Natural killer cell (primary cell): ENCODE measurements at regions of chr20 and their contacts with region 1.

Region 1: DNA sequence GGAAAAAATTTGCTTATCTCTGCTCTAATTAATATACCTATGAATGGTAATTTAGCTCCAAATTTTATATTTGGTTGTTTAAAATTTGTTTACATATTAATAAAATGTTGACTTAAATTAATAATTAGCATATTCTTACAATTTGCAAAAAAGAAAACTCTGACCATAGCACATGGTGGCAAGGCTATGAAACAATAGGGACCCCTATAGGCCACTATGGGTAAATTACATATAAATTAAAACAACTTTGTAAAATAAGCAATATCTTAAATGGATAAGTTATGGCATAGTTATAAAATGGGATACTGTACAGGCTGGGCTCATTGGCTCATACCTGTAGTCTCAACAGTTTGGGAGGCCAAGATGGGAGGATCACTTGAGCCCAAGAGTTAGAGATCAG is 76.0 kb downstream of the MKKS start:
- DNase-seq: peak in 1 of 2 donors; percentile 19
- ATAC-seq: peak; percentile 53 to 86 (median 77)
- H3K4me3 ChIP-seq: no peak overlapping the region
- H3K4me3 Mint-ChIP-seq: no peak overlapping the region
- H3K27ac ChIP-seq: no peak overlapping the region
- H3K27ac Mint-ChIP-seq: no peak overlapping the region
- H3K4me1 ChIP-seq: no peaks in the 10 kb centered on the region
- H3K4me1 Mint-ChIP-seq: peaks cover 0 to 9% of the 10 kb centered on the region in 2 donors
- H3K27me3 ChIP-seq: no peaks in the 10 kb centered on the region
- H3K27me3 Mint-ChIP-seq: peaks cover 2 to 16% of the 10 kb centered on the region in 2 donors
- CTCF ChIP-seq: peak; percentile 75

Region 2: DNA sequence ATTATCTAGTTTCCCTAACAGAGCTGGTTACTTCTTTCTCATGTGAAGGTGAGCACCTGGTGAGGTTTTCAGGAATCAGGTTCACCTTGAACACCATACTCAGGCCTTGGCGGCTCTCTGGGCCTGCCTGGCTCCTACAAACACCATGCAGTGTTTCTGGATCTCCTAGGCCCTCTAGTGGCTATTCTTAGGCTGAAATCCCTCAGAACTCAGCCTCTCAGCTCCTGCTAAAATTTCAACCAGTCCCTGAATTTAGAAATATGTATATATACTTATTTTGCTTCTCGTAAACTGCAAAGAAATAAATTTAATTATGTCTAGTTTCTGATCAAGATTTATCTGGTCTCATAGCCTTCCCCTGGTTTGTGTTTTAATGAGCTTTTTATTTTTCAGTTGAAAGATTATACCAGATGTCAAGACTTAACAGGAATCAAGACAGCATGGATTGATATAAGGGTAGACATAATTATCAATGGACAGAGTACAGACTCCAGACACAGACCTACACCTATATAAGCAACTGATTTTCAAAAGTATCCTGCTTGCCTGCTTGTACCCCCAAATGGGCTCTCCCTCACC is 267.3 kb before region 1 on chr20:
- intact Hi-C with region 1: loop called (anchors 5 kb)
- DNase-seq: peak in 1 of 2 donors; percentile 62
- ATAC-seq: peak in 2 of 3 donors; percentile 51 to 63
- H3K4me3 ChIP-seq: no peak overlapping the region
- H3K4me3 Mint-ChIP-seq: no peak overlapping the region
- H3K27ac ChIP-seq: no peak overlapping the region
- H3K27ac Mint-ChIP-seq: no peak overlapping the region
- H3K4me1 ChIP-seq: no peaks in the 10 kb centered on the region
- H3K4me1 Mint-ChIP-seq: no peaks in the 10 kb centered on the region
- H3K27me3 ChIP-seq: no peaks in the 10 kb centered on the region
- H3K27me3 Mint-ChIP-seq: peaks cover 5 to 8% of the 10 kb centered on the region in 2 donors
- CTCF ChIP-seq: peak; percentile 48

Region 3: GRCh38 chr20:10179574-10180298 is 178.2 kb before region 1 on chr20:
- intact Hi-C with region 1: no loop called
- DNase-seq: no peak
- ATAC-seq: peak in 1 of 3 donors; percentile 14
- H3K4me3 ChIP-seq: no peak overlapping the region
- H3K4me3 Mint-ChIP-seq: no peak overlapping the region
- H3K27ac ChIP-seq: no peak overlapping the region
- H3K27ac Mint-ChIP-seq: no peak overlapping the region
- H3K4me1 ChIP-seq: no peaks in the 10 kb centered on the region
- H3K4me1 Mint-ChIP-seq: no peaks in the 10 kb centered on the region
- H3K27me3 ChIP-seq: no peaks in the 10 kb centered on the region
- H3K27me3 Mint-ChIP-seq: peaks cover 16 to 20% of the 10 kb centered on the region in 2 donors
- CTCF ChIP-seq: no peak

Region 4: DNA sequence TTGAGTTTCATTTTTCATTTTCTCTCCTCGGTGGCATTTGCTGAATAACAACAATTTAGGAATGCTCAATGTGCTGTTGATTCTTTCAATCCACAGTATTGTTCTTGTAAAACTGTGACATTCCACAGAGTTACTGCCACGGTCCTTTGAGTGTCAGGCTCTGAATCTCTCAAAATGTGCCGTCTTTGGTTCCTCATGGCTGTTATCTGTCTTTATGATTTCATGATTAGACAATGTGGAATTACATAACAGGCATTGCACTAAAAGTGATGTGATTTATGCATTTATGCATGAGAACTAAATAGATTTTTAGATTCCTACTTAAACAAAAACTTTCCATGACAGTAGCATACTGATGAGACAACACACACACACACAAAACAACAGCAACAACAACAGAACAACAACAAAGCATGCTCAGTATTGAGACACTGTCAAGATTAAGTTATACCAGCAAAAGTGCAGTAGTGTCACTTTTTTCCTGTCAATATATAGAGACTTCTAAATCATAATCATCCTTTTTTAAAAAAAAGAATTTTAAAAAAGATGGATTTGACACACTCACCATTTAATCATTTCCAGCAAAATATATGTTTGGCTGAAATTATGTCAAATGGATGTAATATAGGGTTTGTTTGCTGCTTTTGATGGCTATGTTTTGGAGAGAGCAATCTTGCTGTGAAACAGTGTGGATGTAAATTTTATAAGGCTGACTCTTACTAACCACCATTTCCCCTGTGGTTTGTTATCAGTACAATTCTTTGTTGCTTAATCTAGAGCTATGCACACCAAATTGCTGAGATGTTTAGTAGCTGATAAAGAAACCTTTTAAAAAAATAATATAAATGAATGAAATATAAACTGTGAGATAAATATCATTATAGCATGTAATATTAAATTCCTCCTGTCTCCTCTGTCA is 51.3 kb before region 1 on chr20:
- intact Hi-C with region 1: loop called (anchors 5 kb)
- DNase-seq: peak in 1 of 2 donors; percentile 18
- ATAC-seq: peak in 2 of 3 donors; percentile 60 to 84
- H3K4me3 ChIP-seq: no peak overlapping the region
- H3K4me3 Mint-ChIP-seq: peak overlapping the region; percentile 65
- H3K27ac ChIP-seq: no peak overlapping the region
- H3K27ac Mint-ChIP-seq: peak overlapping the region in 1 of 2 donors; percentile 38
- H3K4me1 ChIP-seq: peaks cover 8% of the 10 kb centered on the region
- H3K4me1 Mint-ChIP-seq: peaks cover 38 to 49% of the 10 kb centered on the region in 2 donors
- H3K27me3 ChIP-seq: peaks cover 3% of the 10 kb centered on the region
- H3K27me3 Mint-ChIP-seq: peaks cover 11 to 12% of the 10 kb centered on the region in 2 donors
- CTCF ChIP-seq: no peak